Activated naive CD4-positive, alpha-beta T cell treated with anti-CD3 and anti-CD28 coated beads for 36 hours (primary cell): ENCODE measurements at regions of chr16 and their contacts with region 1.

Region 1: GRCh38 chr16:58515125-58515870 is at the start of gene SETD6:
- DNase-seq: peak; percentile 78
- H3K4me3 Mint-ChIP-seq: peak within 1 kb of the TSS; percentile 88
- H3K27ac Mint-ChIP-seq: peak within 1 kb of the TSS; percentile 74
- H3K4me1 Mint-ChIP-seq: peaks cover 45% of the 10 kb centered on the region
- H3K27me3 Mint-ChIP-seq: no peaks in the 10 kb centered on the region
- total RNA-seq, gene SETD6: 8.1 to 8.5 TPM

Region 2: GRCh38 chr16:58494981-58495520 is 20.2 kb before region 1 on chr16:
- CTCF ChIA-PET with region 1: interaction called, 9 read pairs
- intact Hi-C with region 1: loop called (anchors 1 kb)
- DNase-seq: peak; percentile 94
- H3K4me3 Mint-ChIP-seq: no peak overlapping the region
- H3K27ac Mint-ChIP-seq: no peak overlapping the region
- H3K4me1 Mint-ChIP-seq: peaks cover 9% of the 10 kb centered on the region
- H3K27me3 Mint-ChIP-seq: no peaks in the 10 kb centered on the region

Region 3: DNA sequence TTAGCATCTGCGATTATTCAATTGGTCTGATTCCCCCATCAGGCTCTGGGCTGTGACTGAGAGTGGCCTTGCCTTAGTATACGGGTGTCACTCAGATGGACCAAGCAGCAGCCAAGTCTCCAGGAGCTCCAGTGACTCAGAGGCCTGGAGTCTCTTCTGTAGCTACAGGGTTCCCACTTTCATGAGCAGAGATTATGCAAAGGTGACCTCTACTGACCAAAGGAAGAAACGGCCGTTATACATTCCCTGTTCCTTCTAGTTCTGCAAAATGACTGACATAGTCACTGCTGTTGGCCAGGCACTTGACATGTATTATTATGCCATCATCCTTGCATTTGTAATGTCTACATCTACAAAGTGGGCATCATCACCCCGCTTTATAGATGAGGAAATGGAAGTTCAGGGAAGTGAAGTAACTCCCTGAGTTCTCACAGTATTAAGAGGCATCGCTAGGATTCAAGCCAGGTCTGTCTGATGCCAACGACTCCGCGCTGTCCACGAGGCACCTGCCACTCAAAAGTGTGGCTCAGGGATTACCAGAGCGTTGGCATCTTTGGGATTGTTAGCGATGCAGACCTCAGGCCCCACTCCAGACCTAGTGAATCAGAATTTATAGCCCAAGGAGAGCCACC is 146.0 kb after region 1 on chr16:
- CTCF ChIA-PET with region 1: interaction called, 10 read pairs
- intact Hi-C with region 1: loop called (anchors 1 kb)
- DNase-seq: peak; percentile 28
- H3K4me3 Mint-ChIP-seq: no peak overlapping the region
- H3K27ac Mint-ChIP-seq: no peak overlapping the region
- H3K4me1 Mint-ChIP-seq: no peaks in the 10 kb centered on the region
- H3K27me3 Mint-ChIP-seq: peaks cover 5% of the 10 kb centered on the region

Region 4: GRCh38 chr16:58684354-58685083 is 169.2 kb after region 1 on chr16 and contains the start of gene SLC38A7:
- CTCF ChIA-PET with region 1: no interaction called
- intact Hi-C with region 1: loop called (anchors 5 kb)
- DNase-seq: peak; percentile 78
- H3K4me3 Mint-ChIP-seq: peak within 1 kb of the TSS; percentile 89
- H3K27ac Mint-ChIP-seq: peak within 1 kb of the TSS; percentile 8
- H3K4me1 Mint-ChIP-seq: peaks cover 15% of the 10 kb centered on the region
- H3K27me3 Mint-ChIP-seq: no peaks in the 10 kb centered on the region
- total RNA-seq, gene SLC38A7: 4.3 to 4.6 TPM